ENCODE measurements at regions of chr2 and their contacts with region 1.

Region 1: GRCh38 chr2:179581605-179582004 is 279.8 kb downstream of the ZNF385B start:
- DNase-seq: no peak
- ATAC-seq: no peak
- H3K4me3 ChIP-seq: no peak overlapping the region
- H3K27ac ChIP-seq: no peak overlapping the region
- H3K4me1 ChIP-seq: peaks cover 9% of the 10 kb centered on the region
- H3K27me3 ChIP-seq: no peaks in the 10 kb centered on the region
- CTCF ChIP-seq: no peak

Region 2: GRCh38 chr2:179626261-179626660 is 44.7 kb after region 1 on chr2:
- intact Hi-C with region 1: loop called in 1 of 2 experiments (anchors 2 kb)
- DNase-seq: no peak
- ATAC-seq: no peak
- H3K4me3 ChIP-seq: no peak overlapping the region
- H3K27ac ChIP-seq: no peak overlapping the region
- H3K4me1 ChIP-seq: peaks cover 4% of the 10 kb centered on the region
- H3K27me3 ChIP-seq: no peaks in the 10 kb centered on the region
- CTCF ChIP-seq: no peak

Measured in psoas muscle (tissue), 8 donors.